ENCODE measurements at regions of chr16 and their contacts with region 1.

Region 1: GRCh38 chr16:67979955-67980678 is at the start of gene DPEP3:
- DNase-seq: no peak
- H3K4me3 ChIP-seq: no peak within 1 kb of the TSS
- H3K27ac ChIP-seq: no peak within 1 kb of the TSS
- H3K4me1 ChIP-seq: no peaks in the 10 kb centered on the region
- H3K27me3 ChIP-seq: no peaks in the 10 kb centered on the region
- CTCF ChIP-seq: no peak
- POLR2A ChIP-seq: no peak
- total RNA-seq, gene DPEP3: 49.9 TPM in 1 of 2 donors, not detected in the other

Region 2: DNA sequence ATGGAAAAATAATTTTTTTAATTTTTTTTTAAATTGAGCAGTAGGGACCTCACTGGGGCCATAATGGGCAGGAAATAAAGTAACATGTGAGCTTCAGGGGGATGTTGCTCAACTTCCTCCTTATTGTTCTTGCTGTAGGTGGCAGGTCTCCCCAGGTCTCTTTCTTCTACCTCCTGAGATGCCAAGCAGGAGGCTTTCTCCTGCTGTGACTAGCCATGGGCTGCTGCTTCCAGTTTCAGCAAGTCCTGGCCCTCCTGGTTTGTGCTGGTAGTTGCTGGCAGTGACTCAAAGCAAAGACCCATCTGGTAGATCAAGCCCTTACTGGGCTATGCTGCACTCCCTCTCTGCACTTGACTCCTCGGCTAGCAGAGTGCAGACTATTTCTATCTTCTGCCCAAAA is 33.3 kb after region 1 on chr16:
- intact Hi-C with region 1: no loop called
- DNase-seq: no peak
- H3K4me3 ChIP-seq: no peak overlapping the region
- H3K27ac ChIP-seq: no peak overlapping the region
- H3K4me1 ChIP-seq: no peaks in the 10 kb centered on the region
- H3K27me3 ChIP-seq: no peaks in the 10 kb centered on the region
- CTCF ChIP-seq: no peak
- POLR2A ChIP-seq: no peak

Region 3: GRCh38 chr16:68031951-68032350 is 51.8 kb after region 1 on chr16:
- intact Hi-C with region 1: loop called (anchors 10 kb)
- DNase-seq: no peak
- H3K4me3 ChIP-seq: no peak overlapping the region
- H3K27ac ChIP-seq: no peak overlapping the region
- H3K4me1 ChIP-seq: no peaks in the 10 kb centered on the region
- H3K27me3 ChIP-seq: no peaks in the 10 kb centered on the region
- CTCF ChIP-seq: no peak
- POLR2A ChIP-seq: no peak